ENCODE measurements at regions of chr14 and their contacts with region 1.

Region 1: DNA sequence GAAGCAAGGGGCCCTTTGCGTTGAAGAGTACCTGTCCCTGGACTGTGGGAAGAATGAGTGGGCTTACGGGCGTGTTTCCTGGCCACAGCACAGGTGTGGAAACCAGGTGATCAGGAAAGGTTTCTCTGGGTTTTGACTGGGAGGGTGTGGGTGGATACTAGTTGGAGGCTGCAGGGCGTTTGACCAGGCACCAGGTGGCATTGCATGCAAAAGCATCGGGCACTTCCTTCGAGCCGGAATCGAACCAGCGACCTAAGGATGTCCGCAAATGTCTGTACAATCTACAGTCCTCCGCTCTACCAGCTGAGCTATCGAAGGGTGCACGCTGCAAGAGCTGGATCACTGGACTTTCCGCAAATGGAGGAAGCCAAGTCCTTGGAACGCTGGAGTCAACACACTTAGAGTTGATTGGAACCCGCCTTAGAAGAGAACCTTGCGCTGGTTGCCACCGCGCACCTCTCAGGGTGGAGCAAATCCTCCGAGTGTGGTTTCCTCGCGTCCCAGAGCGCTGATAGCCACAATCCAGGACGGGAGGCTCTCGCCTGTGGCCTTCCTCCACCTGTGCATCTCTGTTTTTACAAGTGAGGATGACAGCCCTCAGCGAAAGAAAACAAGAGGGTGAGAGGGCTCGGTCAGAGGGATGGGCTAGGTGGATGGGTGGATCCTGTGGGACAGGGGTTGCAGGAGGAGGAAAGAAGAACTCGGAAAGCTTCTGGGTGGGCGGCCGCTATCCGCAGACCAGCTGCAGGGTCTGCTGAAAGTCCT is 21.2 kb upstream of the RNASE4 start:
- DNase-seq: peak; percentile 94
- ATAC-seq: peak; percentile 77
- H3K4me3 Mint-ChIP-seq: peak overlapping the region; percentile 99
- H3K27ac Mint-ChIP-seq: no peak overlapping the region
- H3K4me1 Mint-ChIP-seq: peaks cover 10% of the 10 kb centered on the region
- H3K27me3 Mint-ChIP-seq: peaks cover 51% of the 10 kb centered on the region
- CTCF ChIP-seq: no peak; the same call in 1 of the 2 replicates

Region 2: GRCh38 chr14:20675669-20676068 is 12.5 kb after region 1 on chr14:
- CTCF ChIA-PET with region 1: interaction called, 106 read pairs
- POLR2A ChIA-PET with region 1: interaction called, 9 read pairs
- DNase-seq: no peak
- ATAC-seq: no peak
- H3K4me3 Mint-ChIP-seq: no peak overlapping the region
- H3K27ac Mint-ChIP-seq: no peak overlapping the region
- H3K4me1 Mint-ChIP-seq: peaks cover 20% of the 10 kb centered on the region
- H3K27me3 Mint-ChIP-seq: no peaks in the 10 kb centered on the region
- CTCF ChIP-seq: no peak

Region 3: DNA sequence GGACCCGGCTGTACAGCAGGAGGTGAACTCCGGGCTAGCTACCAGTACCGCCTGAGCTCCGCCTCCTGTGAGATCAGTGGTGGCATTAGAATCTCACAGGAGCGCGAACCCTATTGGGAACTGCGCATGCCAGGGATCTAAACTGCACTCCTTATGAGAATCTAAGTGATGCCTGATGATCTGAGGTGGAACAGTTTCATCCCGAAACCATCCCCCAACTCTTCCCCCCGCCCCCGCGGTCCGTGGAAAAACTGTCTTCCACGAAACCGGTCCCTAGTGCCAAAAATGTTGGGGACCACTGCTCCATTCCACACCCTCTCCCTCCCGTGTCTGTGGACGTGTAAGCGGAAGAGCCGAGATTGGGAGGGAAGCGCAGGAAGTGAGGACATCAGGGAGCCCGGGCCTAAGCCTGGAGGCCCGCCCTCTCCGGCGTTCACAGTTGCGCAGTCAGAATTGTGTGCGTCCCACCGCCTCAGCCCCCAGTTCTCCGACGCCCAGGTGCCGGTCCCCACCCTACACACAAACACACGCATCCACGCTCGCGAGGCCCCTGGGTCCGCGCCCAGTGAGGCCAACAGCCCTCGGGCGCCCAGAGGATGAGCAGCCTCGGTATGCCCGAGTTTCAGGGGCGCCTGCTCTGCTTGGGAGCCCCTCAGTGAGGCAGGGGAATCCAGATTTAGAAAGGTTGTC is 19.4 kb after region 1 on chr14:
- CTCF ChIA-PET with region 1: interaction called, 106 read pairs
- POLR2A ChIA-PET with region 1: interaction called, 9 read pairs
- DNase-seq: peak; percentile 73
- ATAC-seq: peak; percentile 38
- H3K4me3 Mint-ChIP-seq: no peak overlapping the region
- H3K27ac Mint-ChIP-seq: no peak overlapping the region
- H3K4me1 Mint-ChIP-seq: peaks cover 25% of the 10 kb centered on the region
- H3K27me3 Mint-ChIP-seq: peaks cover 10% of the 10 kb centered on the region
- CTCF ChIP-seq: no peak

Region 4: DNA sequence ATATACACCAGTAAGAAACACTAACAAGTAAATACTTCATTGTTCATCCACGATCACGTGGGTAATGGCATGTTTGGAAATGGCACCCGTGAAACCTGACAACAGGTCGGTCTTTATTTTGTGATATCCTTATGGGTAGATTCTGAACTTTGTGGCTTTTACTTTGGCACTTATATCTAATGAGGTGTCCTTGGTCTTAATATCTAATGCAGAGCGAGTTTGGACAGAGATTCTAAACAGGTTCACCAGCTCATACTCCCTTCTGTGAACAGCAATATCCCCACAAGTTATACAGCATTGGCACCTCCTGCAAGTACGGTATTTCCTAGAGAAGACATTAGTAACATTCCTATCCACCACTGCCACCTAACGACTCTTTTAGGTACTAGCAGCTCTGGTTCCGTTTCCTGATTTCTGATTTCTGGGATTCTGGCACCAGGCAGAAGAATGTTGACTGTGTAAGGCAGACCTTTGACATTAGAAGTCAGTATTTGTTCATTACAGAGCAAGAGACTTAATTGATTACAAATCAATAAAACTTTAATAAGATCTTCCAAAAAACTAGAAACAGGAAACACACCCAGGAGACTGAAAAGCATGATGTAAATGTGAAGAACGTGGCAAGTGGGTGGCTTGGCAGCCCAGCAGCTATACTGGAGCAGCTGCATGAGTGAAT is 27.8 kb after region 1 on chr14:
- CTCF ChIA-PET with region 1: interaction called, 106 read pairs
- POLR2A ChIA-PET with region 1: interaction called, 3 read pairs
- DNase-seq: peak; percentile 41
- ATAC-seq: peak; percentile 92
- H3K4me3 Mint-ChIP-seq: no peak overlapping the region
- H3K27ac Mint-ChIP-seq: no peak overlapping the region
- H3K4me1 Mint-ChIP-seq: peaks cover 5% of the 10 kb centered on the region; the same call in 1 of the 2 replicates
- H3K27me3 Mint-ChIP-seq: peaks cover 4% of the 10 kb centered on the region
- CTCF ChIP-seq: peak; percentile 58; the same call in 1 of the 2 replicates